ENCODE measurements at regions of chr2 and their contacts with region 1.

Region 1: DNA sequence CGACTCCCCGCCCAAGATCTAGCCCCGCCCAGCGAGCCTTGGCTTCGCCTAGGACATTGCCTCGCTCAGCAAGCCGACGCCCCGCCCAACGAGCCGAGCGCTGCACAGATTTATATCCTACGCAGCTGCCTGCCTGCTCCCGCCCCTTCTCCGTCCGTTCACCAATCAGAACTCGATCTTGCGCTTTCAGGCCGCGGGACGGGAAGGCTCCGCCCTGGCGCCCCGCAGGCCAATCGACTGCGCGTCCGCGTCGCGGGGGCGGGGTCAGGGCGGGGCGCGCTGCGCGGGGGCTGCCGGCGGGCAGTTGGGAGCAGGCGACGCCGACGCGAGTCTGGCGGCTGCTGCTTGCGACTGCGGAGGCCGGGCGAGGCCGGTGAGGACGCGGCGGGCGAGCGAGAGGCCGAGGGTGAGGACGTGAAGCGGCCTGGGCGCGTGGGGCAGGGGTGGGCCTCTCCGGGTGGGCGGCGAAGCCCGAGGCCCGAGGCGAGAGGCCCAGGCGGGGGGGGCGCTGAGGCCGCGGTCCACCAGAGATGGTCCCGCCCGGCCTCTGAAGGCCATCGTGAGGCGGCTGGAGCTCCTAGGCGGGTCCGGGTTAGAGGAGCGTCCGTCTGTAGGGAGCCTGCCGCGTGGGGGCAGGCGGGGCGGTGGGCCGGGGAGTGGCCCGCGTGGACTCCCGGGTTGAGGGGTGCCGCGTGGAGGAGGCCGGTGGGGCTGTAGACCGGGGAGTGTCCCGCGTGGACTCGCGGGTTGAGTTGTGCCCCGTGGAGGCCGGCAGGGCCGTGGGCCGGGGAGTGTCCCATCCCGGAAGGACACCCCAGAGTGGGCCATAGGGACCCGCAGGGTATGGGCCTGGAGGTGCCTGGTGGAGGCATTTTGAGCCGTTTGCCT is at the start of gene FARP2:
- DNase-seq: peak; percentile 99
- H3K4me3 ChIP-seq: peak within 1 kb of the TSS; percentile 82
- H3K27ac ChIP-seq: peak within 1 kb of the TSS; percentile 85
- H3K4me1 ChIP-seq: peaks cover 17% of the 10 kb centered on the region
- H3K27me3 ChIP-seq: no peaks in the 10 kb centered on the region
- CTCF ChIP-seq: no peak
- total RNA-seq, gene FARP2: 53.3 and 72.1 TPM in 2 replicates

Region 2: DNA sequence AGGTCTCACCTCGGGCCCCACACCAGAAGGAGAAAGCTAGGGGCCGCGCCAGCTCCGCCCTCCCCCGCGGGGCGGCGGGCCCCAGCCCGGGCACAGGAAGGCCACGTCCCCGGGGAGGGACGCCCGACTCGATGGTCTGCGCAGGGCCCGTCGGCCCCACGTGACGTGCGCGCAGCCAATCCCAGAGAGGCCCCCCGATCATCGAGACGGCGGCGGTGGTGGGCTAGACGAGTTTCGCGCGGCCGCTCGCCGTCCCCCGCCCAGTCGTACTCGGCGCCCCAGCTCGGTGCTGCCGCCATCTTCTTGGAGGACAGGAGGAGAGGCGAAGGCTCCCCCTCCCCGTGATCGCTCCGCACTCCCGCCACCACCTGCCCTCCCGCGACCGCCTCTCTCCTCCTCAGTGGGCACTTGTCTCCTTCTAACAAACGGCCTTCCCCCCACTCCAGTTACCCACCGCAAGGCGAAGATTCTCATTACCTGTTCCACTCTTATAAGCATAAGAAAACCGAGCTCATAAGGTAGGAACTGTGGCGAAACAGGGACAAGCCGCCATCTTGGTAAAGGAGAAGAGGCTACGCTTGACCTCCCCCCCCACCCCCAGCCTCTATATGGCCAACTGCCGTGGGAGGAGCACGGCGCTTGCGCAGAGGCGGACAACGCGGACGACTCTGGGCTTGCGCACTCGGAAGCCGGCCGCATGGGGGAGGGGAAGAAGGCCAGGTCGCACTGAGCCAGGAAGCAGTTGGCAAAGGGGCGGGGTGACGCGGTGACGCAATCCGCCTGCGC is 40.9 kb before region 1 on chr2 and contains the start of gene HDLBP:
- CTCF ChIA-PET with region 1: no interaction called
- POLR2A ChIA-PET with region 1: no interaction called
- intact Hi-C with region 1: loop called (anchors 2 kb)
- DNase-seq: peak; percentile 99
- H3K4me3 ChIP-seq: peak within 1 kb of the TSS; percentile 71
- H3K27ac ChIP-seq: peak within 1 kb of the TSS; percentile 99
- H3K4me1 ChIP-seq: peaks cover 40% of the 10 kb centered on the region
- H3K27me3 ChIP-seq: no peaks in the 10 kb centered on the region
- CTCF ChIP-seq: peak; percentile 80
- total RNA-seq, gene HDLBP: 510 and 581 TPM in 2 replicates

Measured in A673 (cell line).